Activated naive CD4-positive, alpha-beta T cell treated with anti-CD3 and anti-CD28 coated beads for 36 hours (primary cell): ENCODE measurements at regions of chr4 and their contacts with region 1.

Region 1: GRCh38 chr4:55948726-55949474 is at the start of gene CEP135:
- DNase-seq: peak; percentile 94
- H3K4me3 Mint-ChIP-seq: peak within 1 kb of the TSS; percentile 91
- H3K27ac Mint-ChIP-seq: peak within 1 kb of the TSS; percentile 94
- H3K4me1 Mint-ChIP-seq: peaks cover 35% of the 10 kb centered on the region
- H3K27me3 Mint-ChIP-seq: no peaks in the 10 kb centered on the region
- total RNA-seq, gene CEP135: 18.6 to 19.4 TPM

Region 2: GRCh38 chr4:54819034-54819433 is 1129.9 kb before region 1 on chr4:
- CTCF ChIA-PET with region 1: no interaction called
- intact Hi-C with region 1: no loop called
- DNase-seq: no peak
- H3K4me3 Mint-ChIP-seq: no peak overlapping the region
- H3K27ac Mint-ChIP-seq: no peak overlapping the region
- H3K4me1 Mint-ChIP-seq: no peaks in the 10 kb centered on the region
- H3K27me3 Mint-ChIP-seq: no peaks in the 10 kb centered on the region

Region 3: GRCh38 chr4:55395529-55396307 is 553.2 kb before region 1 on chr4 and contains the start of gene TMEM165:
- CTCF ChIA-PET with region 1: no interaction called
- intact Hi-C with region 1: loop called (anchors 1 kb)
- DNase-seq: peak; percentile 92
- H3K4me3 Mint-ChIP-seq: peak within 1 kb of the TSS; percentile 96
- H3K27ac Mint-ChIP-seq: peak within 1 kb of the TSS; percentile 89
- H3K4me1 Mint-ChIP-seq: peaks cover 39% of the 10 kb centered on the region
- H3K27me3 Mint-ChIP-seq: no peaks in the 10 kb centered on the region
- total RNA-seq, gene TMEM165: 39.1 to 40.6 TPM

Region 4: GRCh38 chr4:55866973-55867574 is 81.8 kb before region 1 on chr4:
- CTCF ChIA-PET with region 1: interaction called, 4 read pairs
- intact Hi-C with region 1: loop called (anchors 1 kb)
- DNase-seq: peak; percentile 13
- H3K4me3 Mint-ChIP-seq: no peak overlapping the region
- H3K27ac Mint-ChIP-seq: no peak overlapping the region
- H3K4me1 Mint-ChIP-seq: peaks cover 16% of the 10 kb centered on the region
- H3K27me3 Mint-ChIP-seq: no peaks in the 10 kb centered on the region

Region 5: GRCh38 chr4:56048702-56049431 is 100.0 kb after region 1 on chr4:
- CTCF ChIA-PET with region 1: interaction called, 13 read pairs
- intact Hi-C with region 1: loop called (anchors 1 kb)
- DNase-seq: peak; percentile 66
- H3K4me3 Mint-ChIP-seq: peak overlapping the region; percentile 70
- H3K27ac Mint-ChIP-seq: no peak overlapping the region
- H3K4me1 Mint-ChIP-seq: peaks cover 9% of the 10 kb centered on the region
- H3K27me3 Mint-ChIP-seq: peaks cover 46% of the 10 kb centered on the region

Region 6: GRCh38 chr4:56435306-56435926 is 486.5 kb after region 1 on chr4 and contains the start of gene PPAT:
- CTCF ChIA-PET with region 1: no interaction called
- intact Hi-C with region 1: loop called (anchors 1 kb)
- DNase-seq: peak; percentile 99
- H3K4me3 Mint-ChIP-seq: peak within 1 kb of the TSS; percentile 98
- H3K27ac Mint-ChIP-seq: peak within 1 kb of the TSS; percentile 96
- H3K4me1 Mint-ChIP-seq: peaks cover 50% of the 10 kb centered on the region
- H3K27me3 Mint-ChIP-seq: no peaks in the 10 kb centered on the region
- total RNA-seq, gene PPAT: 35.2 to 40.6 TPM

Region 7: GRCh38 chr4:56799824-56800756 is 851.2 kb after region 1 on chr4:
- CTCF ChIA-PET with region 1: no interaction called
- intact Hi-C with region 1: loop called (anchors 1 kb)
- DNase-seq: peak; percentile 94
- H3K4me3 Mint-ChIP-seq: peak overlapping the region; percentile 95
- H3K27ac Mint-ChIP-seq: peak overlapping the region; percentile 73
- H3K4me1 Mint-ChIP-seq: peaks cover 12% of the 10 kb centered on the region
- H3K27me3 Mint-ChIP-seq: no peaks in the 10 kb centered on the region